ENCODE measurements at regions of chr1 and their contacts with region 1.

Region 1: DNA sequence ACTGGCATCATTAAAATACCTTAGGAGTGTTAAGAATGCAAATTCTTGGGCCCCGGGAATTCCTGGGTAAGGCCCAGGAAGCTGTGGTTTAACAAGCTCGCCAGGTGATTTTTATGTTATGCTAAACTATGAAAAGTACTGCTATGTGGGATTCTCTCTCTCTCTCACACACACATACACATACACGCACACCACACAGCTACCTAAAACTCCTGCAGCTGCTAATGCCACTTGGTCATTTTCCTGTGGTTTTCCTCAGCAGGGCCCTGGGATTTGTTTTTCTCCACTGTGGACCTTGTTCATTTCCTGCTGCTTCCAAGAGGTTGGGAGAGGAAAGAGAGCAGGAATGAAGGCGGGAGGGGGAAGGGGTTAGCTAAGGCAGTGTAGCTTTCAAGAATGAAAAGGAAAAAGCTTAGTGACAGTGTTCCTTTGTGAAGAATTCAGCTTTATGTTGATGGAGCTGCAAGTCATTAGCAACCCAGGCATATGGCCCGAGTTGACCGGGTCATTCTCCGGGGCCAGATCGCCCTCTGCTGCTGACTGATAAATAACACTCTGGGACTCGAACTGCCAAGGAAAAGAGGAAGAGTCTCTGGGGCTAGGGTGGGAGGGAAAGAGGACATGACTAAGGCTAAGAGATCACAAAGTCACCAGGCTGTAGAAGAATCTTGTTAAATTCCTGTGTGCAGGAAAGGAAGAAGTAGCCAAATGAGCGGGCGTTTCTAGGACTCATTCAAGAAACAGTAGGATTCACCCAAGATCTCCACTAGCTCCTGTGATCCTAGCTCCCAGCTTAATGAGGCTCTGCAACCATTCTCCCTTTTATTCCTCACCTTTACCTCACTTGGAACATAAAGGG is 30.5 kb upstream of the LRIG2 start:
- DNase-seq: peak; percentile 83
- H3K4me3 ChIP-seq: no peak overlapping the region
- H3K27ac ChIP-seq: peak overlapping the region; percentile 70
- H3K4me1 ChIP-seq: peaks cover 5% of the 10 kb centered on the region
- H3K27me3 ChIP-seq: no peaks in the 10 kb centered on the region
- CTCF ChIP-seq: peak; percentile 47

Region 2: GRCh38 chr1:112809253-112809684 is 233.2 kb before region 1 on chr1:
- intact Hi-C with region 1: loop called (anchors 5 kb)
- DNase-seq: peak; percentile 85
- H3K4me3 ChIP-seq: no peak overlapping the region
- H3K27ac ChIP-seq: no peak overlapping the region
- H3K4me1 ChIP-seq: peaks cover 3% of the 10 kb centered on the region
- H3K27me3 ChIP-seq: no peaks in the 10 kb centered on the region
- CTCF ChIP-seq: peak; percentile 88

Region 3: DNA sequence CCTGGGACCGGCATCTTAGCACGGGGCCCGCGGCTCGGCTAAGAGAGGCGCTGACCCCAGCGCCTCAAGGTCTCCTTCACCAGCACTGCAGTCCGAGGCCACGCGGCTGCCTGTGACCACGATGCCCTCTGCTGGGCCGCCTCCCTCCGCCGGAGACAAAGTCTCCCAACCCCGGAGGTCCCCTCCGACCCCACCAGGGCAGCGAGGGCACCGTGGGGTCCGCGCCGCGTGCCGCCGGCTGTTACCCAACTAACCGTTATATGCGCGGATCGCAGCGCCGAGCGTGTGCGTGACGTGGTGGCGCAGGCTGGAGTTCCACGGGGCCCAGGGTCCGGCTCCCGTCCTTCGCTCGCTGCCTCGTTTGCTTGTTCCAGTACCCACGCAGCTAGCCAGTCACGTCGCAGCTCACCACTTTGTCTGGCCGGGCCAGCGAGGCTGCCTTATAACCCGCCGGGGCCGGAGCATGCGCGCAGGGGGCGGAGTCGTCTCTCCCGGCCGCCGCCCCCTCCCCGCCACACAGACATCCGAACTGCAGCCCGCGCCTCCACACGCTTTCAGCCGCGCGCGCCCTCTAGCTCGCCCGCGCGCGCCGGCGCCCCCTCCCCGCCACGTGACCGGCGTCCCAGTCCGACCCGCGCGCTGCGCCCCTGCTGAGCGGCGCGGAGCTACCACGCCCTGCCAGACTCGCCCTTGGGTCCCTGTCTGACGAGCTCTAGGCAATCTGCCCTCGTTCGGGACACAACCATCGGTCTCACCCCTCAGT is 86.6 kb before region 1 on chr1 and contains the start of gene SLC16A1:
- intact Hi-C with region 1: loop called (anchors 10 kb)
- DNase-seq: peak; percentile 90
- H3K4me3 ChIP-seq: peak within 1 kb of the TSS; percentile 66
- H3K27ac ChIP-seq: peak within 1 kb of the TSS; percentile 78
- H3K4me1 ChIP-seq: no peaks in the 10 kb centered on the region
- H3K27me3 ChIP-seq: no peaks in the 10 kb centered on the region
- CTCF ChIP-seq: peak; percentile 28
- total RNA-seq, gene SLC16A1: 71.8 to 92.4 TPM

Measured in colonic mucosa (tissue), 4 donors.